Activated B cell treated with CpG ODN at 0.5 μM for 24 hours (primary cell): ENCODE measurements at regions of chr12 and their contacts with region 1.

Region 1: GRCh38 chr12:4648501-4649357 is at the starts of genes AKAP3 and NDUFA9:
- DNase-seq: peak; percentile 67
- ATAC-seq: peak; percentile 94
- H3K4me3 Mint-ChIP-seq: peak within 1 kb of the TSS; percentile 89
- H3K27ac Mint-ChIP-seq: peak within 1 kb of the TSS; percentile 88
- H3K4me1 Mint-ChIP-seq: peaks cover 49% of the 10 kb centered on the region
- H3K27me3 Mint-ChIP-seq: no peaks in the 10 kb centered on the region
- CTCF ChIP-seq: no peak
- total RNA-seq, gene AKAP3: 3.4 and 3.7 TPM in 2 replicates
- total RNA-seq, gene NDUFA9: 108 and 125 TPM in 2 replicates

Region 2: DNA sequence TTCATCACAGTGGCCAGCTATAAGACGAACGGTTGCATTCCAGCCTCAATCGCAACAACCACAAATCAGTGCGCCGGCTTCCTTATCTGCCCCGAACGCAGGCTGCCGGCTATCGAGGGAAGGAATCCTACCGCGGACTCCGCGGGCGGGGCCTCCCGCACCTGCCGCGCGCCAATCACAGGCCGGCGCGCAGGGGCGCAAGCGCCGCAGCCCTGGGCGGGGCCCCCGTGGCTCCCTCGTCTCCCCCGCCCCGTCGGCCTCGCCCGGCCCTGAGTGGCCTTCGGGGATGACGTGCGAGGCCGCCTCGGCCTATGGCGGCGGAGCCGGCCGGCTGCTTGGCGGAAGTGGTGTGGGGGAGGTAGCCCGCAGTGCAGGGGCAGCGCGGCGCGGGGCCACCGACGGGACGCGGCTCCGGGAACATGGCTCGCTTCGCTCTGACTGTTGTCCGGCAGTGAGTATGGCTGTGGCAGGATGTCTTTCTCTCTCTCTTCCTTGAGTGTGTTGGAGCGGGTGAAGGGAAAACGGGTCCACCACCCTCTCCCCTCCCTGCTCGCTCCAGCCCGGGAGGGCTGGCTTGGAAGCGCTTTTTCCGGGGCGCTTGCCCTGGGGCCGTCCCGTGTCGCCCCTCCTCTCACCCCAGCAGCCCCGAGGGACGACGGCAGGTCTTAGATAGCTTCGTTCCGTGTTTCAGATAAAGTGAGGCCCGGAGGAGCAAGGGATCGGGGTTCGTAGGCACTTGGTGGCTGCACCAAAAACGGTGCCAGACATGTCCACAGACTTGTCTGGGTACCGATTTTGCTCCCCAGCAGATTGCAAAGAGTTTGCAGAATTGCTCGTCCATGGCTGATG is 327.7 kb before region 1 on chr12 and contains the start of gene TIGAR:
- CTCF ChIA-PET with region 1: no interaction called
- POLR2A ChIA-PET with region 1: interaction called, 4 read pairs
- intact Hi-C with region 1: loop called (anchors 2 kb)
- DNase-seq: peak; percentile 94
- ATAC-seq: peak; percentile 97
- H3K4me3 Mint-ChIP-seq: peak within 1 kb of the TSS; percentile 95
- H3K27ac Mint-ChIP-seq: peak within 1 kb of the TSS; percentile 92
- H3K4me1 Mint-ChIP-seq: peaks cover 34% of the 10 kb centered on the region
- H3K27me3 Mint-ChIP-seq: no peaks in the 10 kb centered on the region
- CTCF ChIP-seq: no peak
- total RNA-seq, gene TIGAR: 10.0 and 10.2 TPM in 2 replicates

Region 3: GRCh38 chr12:4538207-4539160 is 110.2 kb before region 1 on chr12 and contains the start of gene RAD51AP1:
- CTCF ChIA-PET with region 1: no interaction called
- POLR2A ChIA-PET with region 1: interaction called, 9 read pairs
- intact Hi-C with region 1: loop called (anchors 1 kb)
- DNase-seq: peak; percentile 86
- ATAC-seq: peak; percentile 98
- H3K4me3 Mint-ChIP-seq: peak within 1 kb of the TSS; percentile 91
- H3K27ac Mint-ChIP-seq: peak within 1 kb of the TSS; percentile 99
- H3K4me1 Mint-ChIP-seq: peaks cover 31% of the 10 kb centered on the region
- H3K27me3 Mint-ChIP-seq: no peaks in the 10 kb centered on the region
- CTCF ChIP-seq: no peak
- total RNA-seq, gene RAD51AP1: 5.6 and 5.9 TPM in 2 replicates

Region 4: GRCh38 chr12:4829161-4829792 is 180.5 kb after region 1 on chr12:
- CTCF ChIA-PET with region 1: no interaction called
- POLR2A ChIA-PET with region 1: no interaction called
- intact Hi-C with region 1: loop called (anchors 5 kb)
- DNase-seq: no peak
- ATAC-seq: peak; percentile 87
- H3K4me3 Mint-ChIP-seq: peak overlapping the region; percentile 76
- H3K27ac Mint-ChIP-seq: peak overlapping the region; percentile 93
- H3K4me1 Mint-ChIP-seq: peaks cover 87% of the 10 kb centered on the region
- H3K27me3 Mint-ChIP-seq: no peaks in the 10 kb centered on the region
- CTCF ChIP-seq: no peak